Activated naive CD4-positive, alpha-beta T cell treated with anti-CD3 and anti-CD28 coated beads for 36 hours (primary cell): ENCODE measurements at regions of chr5 and their contacts with region 1.

Region 1: GRCh38 chr5:159515909-159516415 is 185.7 kb upstream of the IL12B start:
- DNase-seq: peak; percentile 87
- H3K4me3 Mint-ChIP-seq: no peak overlapping the region
- H3K27ac Mint-ChIP-seq: no peak overlapping the region
- H3K4me1 Mint-ChIP-seq: peaks cover 9% of the 10 kb centered on the region
- H3K27me3 Mint-ChIP-seq: peaks cover 4% of the 10 kb centered on the region

Region 2: DNA sequence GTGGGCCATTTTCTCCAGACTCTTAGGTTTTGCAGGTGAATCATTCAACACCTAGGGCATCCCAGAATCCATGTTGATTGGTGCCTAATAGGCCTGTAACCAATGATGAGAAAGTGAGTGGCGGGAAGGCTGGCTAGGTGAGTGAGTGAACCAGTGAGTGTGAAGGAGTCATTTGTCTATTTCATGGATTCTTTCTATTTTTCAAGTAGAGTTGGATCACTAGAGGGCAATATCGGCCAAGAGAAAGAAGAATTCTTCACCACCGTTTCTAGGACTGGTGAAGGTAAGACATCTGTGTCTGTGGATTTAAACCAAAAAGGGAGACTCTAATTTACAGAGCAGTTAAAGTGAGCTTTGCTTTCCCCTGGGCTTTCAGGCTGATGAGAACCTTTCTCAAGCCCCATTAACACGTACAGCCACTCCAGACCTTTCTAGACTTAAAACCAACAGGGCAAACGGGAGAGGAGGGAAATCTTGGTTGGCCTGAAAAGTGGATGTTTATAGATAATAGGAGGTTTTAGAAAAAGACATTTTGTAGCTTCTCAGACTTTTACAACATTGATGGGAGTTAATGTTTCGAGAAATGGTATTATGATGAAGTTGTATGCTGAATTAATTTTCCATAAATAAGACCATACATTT is 71.4 kb before region 1 on chr5:
- CTCF ChIA-PET with region 1: interaction called, 5 read pairs
- intact Hi-C with region 1: loop called (anchors 2 kb)
- DNase-seq: no peak
- H3K4me3 Mint-ChIP-seq: no peak overlapping the region
- H3K27ac Mint-ChIP-seq: no peak overlapping the region
- H3K4me1 Mint-ChIP-seq: no peaks in the 10 kb centered on the region
- H3K27me3 Mint-ChIP-seq: peaks cover 6% of the 10 kb centered on the region

Region 3: GRCh38 chr5:159660401-159660800 is 144.4 kb after region 1 on chr5:
- CTCF ChIA-PET with region 1: no interaction called
- intact Hi-C with region 1: no loop called
- DNase-seq: no peak
- H3K4me3 Mint-ChIP-seq: no peak overlapping the region
- H3K27ac Mint-ChIP-seq: no peak overlapping the region
- H3K4me1 Mint-ChIP-seq: no peaks in the 10 kb centered on the region
- H3K27me3 Mint-ChIP-seq: no peaks in the 10 kb centered on the region

Region 4: GRCh38 chr5:159773062-159773924 is 257.3 kb after region 1 on chr5:
- CTCF ChIA-PET with region 1: no interaction called
- intact Hi-C with region 1: loop called (anchors 5 kb)
- DNase-seq: peak; percentile 86
- H3K4me3 Mint-ChIP-seq: peak overlapping the region; percentile 41
- H3K27ac Mint-ChIP-seq: no peak overlapping the region
- H3K4me1 Mint-ChIP-seq: peaks cover 8% of the 10 kb centered on the region
- H3K27me3 Mint-ChIP-seq: peaks cover 32% of the 10 kb centered on the region

Region 5: DNA sequence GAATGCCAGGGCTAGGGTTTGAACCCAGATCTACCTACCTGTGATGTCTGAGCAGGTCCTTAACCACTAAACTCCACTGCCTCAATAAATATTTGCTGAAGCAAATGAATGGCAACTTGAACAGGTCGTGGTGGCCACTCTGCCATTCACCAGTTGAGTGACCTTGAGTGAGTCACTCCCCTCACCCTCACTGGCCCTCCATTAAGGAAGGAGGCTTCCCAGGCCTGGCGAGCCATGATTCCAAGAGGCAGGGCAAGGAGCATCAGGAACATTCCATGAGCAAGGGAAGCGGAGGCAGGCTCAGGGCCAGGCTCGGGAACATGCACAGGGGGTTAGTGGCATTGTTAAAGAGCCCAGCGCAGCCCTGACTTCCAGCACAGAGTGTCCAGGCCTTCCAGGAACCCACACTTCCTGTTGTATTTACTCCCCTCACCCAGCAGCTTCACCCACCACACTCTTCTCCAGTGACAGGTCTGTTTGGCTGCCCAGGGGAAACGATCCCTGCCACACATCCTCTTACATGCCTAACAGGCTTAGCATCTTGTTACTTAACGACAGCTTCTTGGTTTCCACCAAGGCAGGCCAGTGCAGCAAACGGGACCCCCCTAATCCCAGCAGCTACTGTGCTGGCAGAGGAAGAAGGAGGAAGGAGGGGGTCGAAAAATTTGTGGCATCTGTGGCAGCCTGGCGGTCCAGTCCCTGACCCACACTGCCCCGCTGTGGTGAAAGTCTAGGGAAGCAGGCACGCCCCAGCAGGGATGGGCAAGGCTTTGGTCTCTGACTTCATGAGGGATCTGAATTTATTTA is 449.3 kb after region 1 on chr5:
- CTCF ChIA-PET with region 1: no interaction called
- intact Hi-C with region 1: loop called (anchors 2 kb)
- DNase-seq: peak; percentile 55
- H3K4me3 Mint-ChIP-seq: no peak overlapping the region
- H3K27ac Mint-ChIP-seq: no peak overlapping the region
- H3K4me1 Mint-ChIP-seq: no peaks in the 10 kb centered on the region
- H3K27me3 Mint-ChIP-seq: peaks cover 28% of the 10 kb centered on the region